ENCODE measurements at regions of chr1 and their contacts with region 1.

Region 1: DNA sequence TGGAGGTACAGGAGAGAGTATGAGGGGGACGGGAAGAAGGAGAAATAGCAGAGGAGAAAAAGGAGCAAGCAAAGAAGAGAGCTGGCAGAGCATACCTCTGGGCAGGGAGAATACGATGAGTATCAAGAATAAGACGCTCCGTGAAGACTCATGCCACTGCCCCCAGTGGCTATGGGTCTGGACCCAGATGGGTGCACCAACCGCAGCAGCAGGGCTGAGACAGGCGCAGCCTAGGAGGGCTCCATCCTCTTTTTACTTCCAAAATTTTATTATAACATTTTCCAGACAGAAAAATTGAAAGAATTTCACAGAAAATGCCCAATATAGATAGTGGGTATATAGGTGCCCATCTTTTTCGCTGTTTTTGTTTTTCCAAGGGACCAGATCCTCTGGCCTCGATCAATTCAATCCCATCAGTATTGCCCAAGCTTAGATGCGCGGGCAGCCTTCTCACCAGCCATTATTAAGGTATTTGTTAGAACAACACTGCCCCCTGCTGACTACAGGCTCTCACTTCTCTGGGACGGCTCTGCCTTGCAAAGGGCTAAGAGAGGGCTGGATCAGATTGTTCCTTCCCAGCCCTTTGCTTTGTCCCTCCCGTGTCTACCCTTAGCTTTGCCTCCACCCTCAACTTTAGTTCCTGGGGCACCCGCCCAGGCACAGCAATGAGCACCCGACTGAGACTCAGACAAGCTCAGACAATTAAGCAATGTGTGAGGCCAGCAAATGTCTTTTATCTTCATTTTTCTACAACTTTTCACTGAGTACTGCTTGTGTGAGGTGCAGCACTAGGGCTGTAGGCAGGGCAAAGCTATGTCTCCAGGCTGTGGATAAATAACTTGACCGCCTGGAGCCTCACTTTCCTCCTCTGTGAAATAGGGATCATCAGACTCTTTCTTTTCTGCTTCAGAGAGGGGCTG is 17.5 kb upstream of the CAMK1G start:
- DNase-seq: peak; percentile 64 to 78 (median 67)
- H3K4me3 ChIP-seq: no peak overlapping the region
- H3K4me3 Mint-ChIP-seq: no peak overlapping the region
- H3K27ac ChIP-seq: no peak overlapping the region
- H3K27ac Mint-ChIP-seq: peak overlapping the region in 1 of 7 donors; percentile 45
- H3K4me1 ChIP-seq: peaks cover 6% of the 10 kb centered on the region
- H3K4me1 Mint-ChIP-seq: peaks cover 6 to 7% (median 6%) of the 10 kb centered on the region in 4 donors
- H3K27me3 ChIP-seq: peaks cover 9% of the 10 kb centered on the region
- H3K27me3 Mint-ChIP-seq: peaks cover 17 to 40% of the 10 kb centered on the region in 2 donors

Region 2: GRCh38 chr1:209554761-209555611 is 11.0 kb before region 1 on chr1:
- CTCF ChIA-PET with region 1: interaction called, 14 read pairs
- POLR2A ChIA-PET with region 1: no interaction called
- intact Hi-C with region 1: no loop called
- DNase-seq: no peak
- H3K4me3 ChIP-seq: no peak overlapping the region
- H3K4me3 Mint-ChIP-seq: no peak overlapping the region
- H3K27ac ChIP-seq: no peak overlapping the region
- H3K27ac Mint-ChIP-seq: no peak overlapping the region
- H3K4me1 ChIP-seq: no peaks in the 10 kb centered on the region
- H3K4me1 Mint-ChIP-seq: no peaks in the 10 kb centered on the region
- H3K27me3 ChIP-seq: no peaks in the 10 kb centered on the region
- H3K27me3 Mint-ChIP-seq: peaks cover 3% of the 10 kb centered on the region in 2 donors

Region 3: DNA sequence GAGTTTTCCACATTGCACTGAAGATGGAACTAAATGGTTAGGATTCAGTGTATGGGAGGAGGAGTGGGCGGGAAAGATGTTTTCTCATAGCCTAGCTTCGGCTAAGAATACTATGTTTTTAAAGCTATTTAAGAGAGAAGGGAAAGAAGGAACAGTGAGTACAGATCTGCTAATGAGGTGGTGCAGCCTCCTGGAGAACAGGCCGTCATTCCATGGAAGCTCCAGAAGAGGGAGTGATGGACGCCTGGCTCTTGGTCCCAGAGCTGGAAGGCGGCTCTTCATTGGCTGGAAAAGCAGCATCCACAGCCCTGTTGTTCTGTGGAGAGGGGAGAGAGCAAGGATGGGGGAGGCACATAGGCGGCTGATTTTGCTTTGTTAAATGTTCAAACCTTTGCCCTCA is 24.4 kb after region 1 on chr1:
- CTCF ChIA-PET with region 1: interaction called, 13 read pairs
- POLR2A ChIA-PET with region 1: no interaction called
- intact Hi-C with region 1: no loop called
- DNase-seq: no peak
- H3K4me3 ChIP-seq: no peak overlapping the region
- H3K4me3 Mint-ChIP-seq: no peak overlapping the region
- H3K27ac ChIP-seq: no peak overlapping the region
- H3K27ac Mint-ChIP-seq: no peak overlapping the region
- H3K4me1 ChIP-seq: no peaks in the 10 kb centered on the region
- H3K4me1 Mint-ChIP-seq: peaks cover 0 to 2% (median 0%) of the 10 kb centered on the region in 4 donors
- H3K27me3 ChIP-seq: no peaks in the 10 kb centered on the region
- H3K27me3 Mint-ChIP-seq: peaks cover 7 to 10% of the 10 kb centered on the region in 2 donors

Region 4: DNA sequence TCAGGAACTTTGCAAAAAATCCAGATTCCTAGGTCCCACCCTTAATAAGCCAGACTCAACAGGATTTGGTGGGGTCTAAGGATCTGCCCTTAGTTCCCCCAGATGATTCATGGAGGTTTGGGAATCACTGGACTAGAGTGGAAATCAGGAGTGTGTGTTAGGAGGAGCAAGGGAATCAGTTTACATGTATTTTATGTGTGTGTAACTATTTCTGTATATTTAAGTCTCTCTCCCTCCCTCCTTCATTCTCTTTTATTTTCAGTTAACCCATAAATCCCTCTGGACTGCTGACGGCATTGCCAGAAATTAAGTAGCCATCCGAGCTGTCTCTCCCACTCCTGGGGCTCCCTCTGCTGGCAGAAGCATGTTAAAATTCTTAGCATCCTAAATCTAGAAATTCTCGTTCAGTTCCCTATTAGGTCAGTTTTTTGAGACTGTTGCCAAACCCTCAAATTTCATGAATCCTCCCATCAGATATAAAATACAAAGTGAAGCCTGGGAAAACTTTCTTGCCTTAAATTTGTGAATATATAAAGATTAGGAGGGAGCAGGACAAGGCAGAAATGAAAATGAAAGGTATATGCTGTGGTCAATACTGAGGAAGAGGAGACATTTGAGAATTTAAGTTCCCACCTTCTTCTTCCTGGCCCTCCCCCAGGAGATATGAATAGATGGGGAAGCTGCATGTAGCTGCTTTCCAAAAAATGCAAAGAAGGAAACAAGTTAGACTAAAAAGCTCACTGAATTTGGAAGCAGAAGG is 126.9 kb after region 1 on chr1:
- CTCF ChIA-PET with region 1: interaction called, 38 read pairs
- POLR2A ChIA-PET with region 1: interaction called, 3 read pairs
- intact Hi-C with region 1: loop called (anchors 1 kb)
- DNase-seq: peak; percentile 60 to 68 (median 62)
- H3K4me3 ChIP-seq: no peak overlapping the region
- H3K4me3 Mint-ChIP-seq: peak overlapping the region in 1 of 8 donors; percentile 9
- H3K27ac ChIP-seq: no peak overlapping the region
- H3K27ac Mint-ChIP-seq: peak overlapping the region in 3 of 7 donors; percentile 43 to 66 (median 57)
- H3K4me1 ChIP-seq: peaks cover 15% of the 10 kb centered on the region
- H3K4me1 Mint-ChIP-seq: peaks cover 18 to 25% (median 22%) of the 10 kb centered on the region in 4 donors
- H3K27me3 ChIP-seq: no peaks in the 10 kb centered on the region
- H3K27me3 Mint-ChIP-seq: peaks cover 0 to 2% of the 10 kb centered on the region in 2 donors

Region 5: DNA sequence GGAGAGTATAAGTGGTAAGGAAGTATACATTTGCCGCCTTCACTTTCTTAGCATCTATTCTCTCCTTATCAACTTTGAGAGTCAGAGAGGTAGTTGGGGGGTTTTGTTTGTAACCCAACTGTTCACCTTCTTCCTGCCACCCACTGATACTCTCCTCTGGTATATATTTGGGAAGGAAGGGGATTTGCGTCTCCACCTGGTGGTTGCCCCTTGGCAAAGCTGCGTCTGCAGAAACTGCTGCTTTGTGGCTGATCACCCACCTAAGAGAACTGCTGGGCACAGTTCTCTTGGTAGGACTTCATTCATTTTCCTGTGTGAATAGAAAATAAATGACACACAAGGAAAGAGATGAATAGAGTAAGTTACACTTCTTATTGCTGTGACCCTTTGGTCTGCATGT is 459.0 kb after region 1 on chr1:
- CTCF ChIA-PET with region 1: no interaction called
- POLR2A ChIA-PET with region 1: no interaction called
- intact Hi-C with region 1: no loop called
- DNase-seq: no peak
- H3K4me3 ChIP-seq: no peak overlapping the region
- H3K4me3 Mint-ChIP-seq: no peak overlapping the region
- H3K27ac ChIP-seq: no peak overlapping the region
- H3K27ac Mint-ChIP-seq: no peak overlapping the region
- H3K4me1 ChIP-seq: no peaks in the 10 kb centered on the region
- H3K4me1 Mint-ChIP-seq: no peaks in the 10 kb centered on the region
- H3K27me3 ChIP-seq: no peaks in the 10 kb centered on the region
- H3K27me3 Mint-ChIP-seq: peaks cover 2 to 5% of the 10 kb centered on the region in 2 donors

Measured in CD4-positive, alpha-beta memory T cell (primary cell).